ENCODE measurements at regions of chr19 and their contacts with region 1.

Region 1: DNA sequence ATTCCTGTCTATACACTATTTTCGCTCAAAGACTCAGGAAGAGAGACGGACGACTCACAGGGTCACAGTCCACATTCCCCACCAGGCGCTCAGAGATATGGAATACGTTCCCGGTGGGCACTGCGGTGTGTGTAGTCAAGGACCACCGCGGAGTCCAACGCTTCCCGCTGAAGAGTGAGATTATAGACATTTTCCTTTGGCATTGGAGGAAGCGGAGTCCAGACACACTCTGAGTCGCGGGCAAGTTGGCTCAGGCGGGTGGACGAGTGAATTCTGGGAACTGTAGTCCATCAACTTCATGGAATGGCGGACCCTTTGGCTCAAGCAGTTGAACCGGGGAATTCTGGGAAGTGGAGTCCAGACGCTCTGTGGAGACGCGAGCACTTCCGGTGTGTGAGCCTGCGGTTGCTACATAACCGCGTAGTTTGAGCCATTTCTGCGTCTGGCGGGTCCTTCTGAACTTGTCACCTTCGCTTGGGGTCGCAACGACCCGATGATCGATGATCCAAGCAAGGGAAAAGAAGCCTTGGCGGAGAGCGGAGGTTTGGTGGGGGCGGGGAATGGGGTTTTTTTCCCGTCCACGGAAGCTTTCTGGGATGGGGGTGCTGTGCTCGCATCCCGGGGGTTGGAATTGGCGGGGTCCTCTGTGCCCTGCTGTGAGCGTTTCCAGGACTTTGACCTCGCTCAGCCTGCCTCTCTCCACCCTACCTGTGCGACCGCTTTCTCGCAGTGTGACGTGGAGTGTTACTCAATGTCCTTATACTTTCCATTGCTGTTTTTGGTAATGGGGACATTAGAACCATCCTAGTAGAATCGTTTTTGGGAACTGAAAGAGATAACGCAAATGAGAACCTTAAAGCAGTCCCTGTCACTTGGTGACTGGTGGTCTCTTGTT is at the start of gene ZNF230:
- DNase-seq: peak; percentile 95
- H3K4me3 ChIP-seq: peak within 1 kb of the TSS; percentile 61 to 64
- H3K27ac ChIP-seq: peak within 1 kb of the TSS; percentile 66 to 67
- H3K4me1 ChIP-seq: no peaks in the 10 kb centered on the region
- H3K27me3 ChIP-seq: no peaks in the 10 kb centered on the region
- CTCF ChIP-seq: no peak
- POLR2A ChIP-seq: peak; percentile 20
- total RNA-seq, gene ZNF230: 2.6 to 3.5 TPM

Region 2: GRCh38 chr19:43687660-43687997 is 315.2 kb before region 1 on chr19:
- intact Hi-C with region 1: no loop called
- DNase-seq: no peak
- H3K4me3 ChIP-seq: no peak overlapping the region
- H3K27ac ChIP-seq: no peak overlapping the region
- H3K4me1 ChIP-seq: no peaks in the 10 kb centered on the region
- H3K27me3 ChIP-seq: no peaks in the 10 kb centered on the region
- CTCF ChIP-seq: no peak
- POLR2A ChIP-seq: no peak

Region 3: GRCh38 chr19:43913383-43913782 is 89.4 kb before region 1 on chr19:
- intact Hi-C with region 1: no loop called
- DNase-seq: no peak
- H3K4me3 ChIP-seq: no peak overlapping the region
- H3K27ac ChIP-seq: no peak overlapping the region
- H3K4me1 ChIP-seq: no peaks in the 10 kb centered on the region
- H3K27me3 ChIP-seq: no peaks in the 10 kb centered on the region
- CTCF ChIP-seq: no peak
- POLR2A ChIP-seq: no peak

Region 4: DNA sequence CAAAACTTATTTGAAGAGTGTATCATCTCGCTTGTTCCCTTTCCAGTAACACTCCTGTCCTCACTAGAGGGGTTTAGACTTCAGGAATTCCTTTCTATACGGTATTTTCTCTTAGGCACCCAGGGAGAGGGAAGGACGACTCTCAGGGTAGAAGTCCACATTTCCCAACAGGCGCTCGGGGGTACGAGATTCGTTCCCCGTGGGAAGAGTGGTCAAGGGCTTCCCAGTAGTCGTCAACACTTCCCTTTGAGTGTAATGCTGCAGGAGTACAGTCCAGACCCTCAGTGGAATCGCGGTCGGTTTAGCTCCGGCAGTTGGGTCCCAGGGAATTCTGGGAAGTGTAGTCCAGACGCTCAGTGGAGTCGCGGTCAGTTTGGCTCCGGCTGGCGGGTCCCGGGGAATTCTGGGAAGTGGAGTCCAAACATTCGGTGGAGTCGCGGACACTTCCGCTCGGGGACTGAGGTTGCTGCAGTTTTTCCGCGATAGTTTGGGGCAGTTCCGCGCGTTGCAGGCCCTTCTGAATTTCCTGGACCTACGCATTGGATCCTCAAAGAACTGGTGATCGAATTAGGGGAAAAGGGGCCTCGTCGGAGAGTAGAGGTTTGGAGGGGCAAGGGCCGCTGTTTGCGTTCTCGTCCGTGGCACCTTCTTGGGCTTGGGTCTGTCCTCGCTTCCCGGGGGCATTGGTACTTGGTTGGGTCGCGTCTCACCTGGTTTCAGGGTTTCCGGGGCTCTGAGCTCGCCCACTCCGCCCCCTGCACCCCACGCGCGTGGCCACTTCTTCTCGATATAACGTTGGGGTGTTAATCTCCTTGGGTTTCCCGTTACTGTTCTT is 91.3 kb after region 1 on chr19 and contains the start of gene ZNF224:
- intact Hi-C with region 1: loop called (anchors 10 kb)
- DNase-seq: peak; percentile 93
- H3K4me3 ChIP-seq: peak within 1 kb of the TSS; percentile 65 to 74
- H3K27ac ChIP-seq: peak within 1 kb of the TSS; percentile 71 to 72
- H3K4me1 ChIP-seq: no peaks in the 10 kb centered on the region
- H3K27me3 ChIP-seq: no peaks in the 10 kb centered on the region
- CTCF ChIP-seq: no peak
- POLR2A ChIP-seq: no peak
- total RNA-seq, gene ZNF224: 15.7 to 27.4 TPM

Measured in prostate gland (tissue), 2 donors.